ENCODE measurements at regions of chr10 and their contacts with region 1.

Region 1: GRCh38 chr10:7881119-7881518 is 62.8 kb downstream of the TAF3 start:
- DNase-seq: no peak
- ATAC-seq: no peak
- H3K4me3 ChIP-seq: no peak overlapping the region
- H3K4me3 Mint-ChIP-seq: no peak overlapping the region
- H3K27ac ChIP-seq: no peak overlapping the region
- H3K27ac Mint-ChIP-seq: no peak overlapping the region
- H3K4me1 ChIP-seq: no peaks in the 10 kb centered on the region
- H3K4me1 Mint-ChIP-seq: peaks cover 46% of the 10 kb centered on the region
- H3K27me3 ChIP-seq: no peaks in the 10 kb centered on the region
- H3K27me3 Mint-ChIP-seq: no peaks in the 10 kb centered on the region
- CTCF ChIP-seq: no peak

Region 2: DNA sequence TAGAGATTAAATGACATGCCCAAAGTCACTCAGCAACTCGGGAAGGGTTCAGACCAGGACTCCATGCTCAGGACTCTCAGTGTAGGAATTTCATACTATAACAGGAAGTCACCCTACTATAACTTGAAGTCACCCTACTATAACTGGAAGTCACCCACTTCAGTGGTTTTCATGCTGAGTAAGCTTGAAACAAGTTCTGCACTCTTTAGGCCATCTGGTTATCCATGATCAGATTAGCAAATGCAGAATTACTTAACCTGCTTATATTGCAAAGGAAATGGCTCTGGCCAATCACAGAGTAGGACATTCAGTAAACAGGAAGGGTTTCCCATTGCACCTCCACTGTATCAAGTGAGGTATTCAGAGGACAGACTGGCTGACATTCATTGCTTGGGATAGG is 1413.7 kb after region 1 on chr10:
- CTCF ChIA-PET with region 1: no interaction called
- POLR2A ChIA-PET with region 1: no interaction called
- intact Hi-C with region 1: loop called in 1 of 2 experiments (anchors 5 kb)
- DNase-seq: peak in 1 of 14 experiments; percentile 19
- ATAC-seq: no peak
- H3K4me3 ChIP-seq: no peak overlapping the region
- H3K4me3 Mint-ChIP-seq: no peak overlapping the region
- H3K27ac ChIP-seq: no peak overlapping the region
- H3K27ac Mint-ChIP-seq: no peak overlapping the region
- H3K4me1 ChIP-seq: peaks cover 5% of the 10 kb centered on the region
- H3K4me1 Mint-ChIP-seq: peaks cover 16% of the 10 kb centered on the region
- H3K27me3 ChIP-seq: no peaks in the 10 kb centered on the region
- H3K27me3 Mint-ChIP-seq: no peaks in the 10 kb centered on the region
- CTCF ChIP-seq: no peak

Measured in CD4-positive, alpha-beta T cell (primary cell).